ENCODE measurements at regions of chr22 and their contacts with region 1.

Region 1: DNA sequence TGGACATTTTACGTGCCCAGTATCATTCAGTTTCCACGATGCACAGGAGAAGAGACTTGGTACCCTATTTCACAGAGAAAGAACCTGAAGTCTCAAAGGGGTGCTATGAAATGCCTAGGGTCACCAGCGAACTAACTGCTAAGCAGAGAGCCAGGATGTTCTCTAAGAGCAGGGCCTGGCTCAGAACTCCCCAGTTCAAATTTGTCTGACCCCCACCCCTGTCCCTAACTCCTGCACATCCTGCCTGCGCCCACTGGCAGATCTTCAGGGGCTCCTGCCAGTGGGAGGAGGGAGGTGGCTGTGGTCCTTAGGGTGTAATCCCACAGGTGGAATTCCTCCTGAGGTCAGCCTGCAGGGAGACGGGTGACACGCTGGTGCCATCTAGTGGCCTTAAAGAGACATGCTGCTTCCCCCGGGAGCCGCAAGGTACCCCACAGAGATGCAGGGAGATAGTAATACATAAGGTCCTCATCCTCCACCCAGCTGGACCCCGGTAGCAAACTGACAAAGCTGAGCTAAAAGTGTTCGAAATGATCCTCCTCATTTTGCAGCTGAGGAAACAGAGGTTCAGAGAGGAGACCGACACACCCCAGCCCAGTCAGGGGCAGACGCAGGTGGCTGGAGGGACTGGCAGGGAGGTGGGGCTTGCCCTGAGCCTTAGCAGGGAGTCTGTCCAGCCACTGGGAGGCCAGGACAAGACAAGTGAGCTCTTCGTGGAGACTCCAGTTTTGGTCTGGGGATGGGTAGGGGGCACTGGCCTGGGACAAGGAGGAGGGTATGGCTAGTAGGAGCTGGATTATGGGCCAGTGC is 34.1 kb downstream of the MB start:
- DNase-seq: peak in 1 of 2 experiments; percentile 82
- H3K4me3 ChIP-seq: no peak overlapping the region
- H3K27ac ChIP-seq: no peak overlapping the region
- H3K4me1 ChIP-seq: no peaks in the 10 kb centered on the region
- H3K27me3 ChIP-seq: no peaks in the 10 kb centered on the region; a peak in 1 of 7 replicates
- CTCF ChIP-seq: peak; percentile 92 to 95 (median 92)
- EP300 ChIP-seq: no peak
- POLR2A ChIP-seq: no peak
- RAD21 ChIP-seq: peak; percentile 95 to 97

Region 2: DNA sequence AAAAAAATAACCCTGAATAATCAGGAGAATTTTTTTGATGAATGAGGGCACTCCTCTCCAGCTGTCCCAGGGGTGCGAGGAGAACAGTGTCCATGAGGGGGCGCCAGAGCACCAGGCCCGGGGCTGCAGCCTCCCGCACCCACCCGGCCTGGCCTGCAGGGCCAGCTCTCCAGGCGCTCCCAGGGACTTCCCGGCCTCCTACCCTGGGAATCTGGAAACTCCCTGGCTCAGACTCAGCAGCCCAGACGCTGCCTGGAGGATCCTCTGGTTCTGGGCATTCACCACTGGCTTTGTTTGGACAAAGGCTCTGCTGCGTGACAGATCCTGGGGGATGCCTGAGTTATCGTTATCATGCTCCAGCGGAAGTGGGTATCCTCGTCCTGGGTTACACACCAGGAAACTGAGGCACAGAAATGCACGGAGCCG is 152.2 kb before region 1 on chr22:
- CTCF ChIA-PET with region 1: interaction called, 124 read pairs
- POLR2A ChIA-PET with region 1: interaction called, 16 read pairs
- DNase-seq: peak; percentile 49 to 98
- H3K4me3 ChIP-seq: no peak overlapping the region
- H3K27ac ChIP-seq: no peak overlapping the region
- H3K4me1 ChIP-seq: peaks cover under 1 to 10% (median 3%) of the 10 kb centered on the region in 4 experiments; a peak in 6 of 7 replicates
- H3K27me3 ChIP-seq: no peaks in the 10 kb centered on the region
- CTCF ChIP-seq: peak; percentile 85 to 98 (median 90)
- EP300 ChIP-seq: no peak
- POLR2A ChIP-seq: no peak
- RAD21 ChIP-seq: peak; percentile 96 to 97

Region 3: DNA sequence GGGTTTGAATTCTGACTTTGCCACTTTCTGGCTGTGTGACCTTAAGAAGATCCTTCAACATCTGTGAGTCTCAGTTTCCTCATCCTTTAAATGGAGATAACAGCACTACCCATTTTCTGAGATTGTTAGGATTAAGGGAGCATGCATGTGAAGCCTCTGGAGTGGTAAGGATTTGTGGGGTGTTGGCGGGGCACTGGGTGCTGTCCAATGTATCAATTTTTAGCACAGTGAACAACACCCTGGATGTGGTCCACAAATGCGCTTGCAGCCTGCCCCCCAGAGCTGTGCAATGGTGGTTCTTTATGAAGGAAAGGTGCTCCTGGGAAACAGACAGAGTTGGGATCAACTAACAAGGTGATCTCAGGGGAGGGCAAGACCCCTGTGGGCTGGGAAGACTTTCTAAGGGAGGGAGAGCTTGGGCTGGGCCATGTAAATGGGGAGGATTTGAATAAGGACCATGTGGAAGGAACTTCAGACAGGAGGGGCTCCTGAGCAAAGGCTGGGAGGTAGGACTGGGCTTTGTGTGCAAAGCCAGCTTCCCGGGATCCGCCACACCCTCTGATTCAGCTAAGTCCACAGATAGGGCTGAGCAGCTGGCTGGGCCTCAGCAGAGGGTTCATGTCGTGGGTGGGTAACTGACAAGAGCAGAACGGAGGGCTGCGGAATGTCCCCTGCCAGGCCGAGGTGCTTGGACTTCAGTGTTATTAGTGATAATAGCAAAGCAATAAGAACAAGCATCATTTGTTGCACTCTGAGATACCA is 65.1 kb before region 1 on chr22:
- CTCF ChIA-PET with region 1: interaction called, 13 read pairs
- POLR2A ChIA-PET with region 1: no interaction called
- DNase-seq: no peak
- H3K4me3 ChIP-seq: no peak overlapping the region
- H3K27ac ChIP-seq: no peak overlapping the region
- H3K4me1 ChIP-seq: peaks cover 0 to 6% (median 3%) of the 10 kb centered on the region in 4 experiments; a peak in 5 of 7 replicates
- H3K27me3 ChIP-seq: no peaks in the 10 kb centered on the region; a peak in 1 of 7 replicates
- CTCF ChIP-seq: no peak
- EP300 ChIP-seq: no peak
- POLR2A ChIP-seq: no peak
- RAD21 ChIP-seq: no peak

Region 4: GRCh38 chr22:35539910-35540594 is 43.0 kb before region 1 on chr22:
- CTCF ChIA-PET with region 1: interaction called, 27 read pairs
- POLR2A ChIA-PET with region 1: no interaction called
- DNase-seq: peak in 1 of 2 experiments; percentile 74
- H3K4me3 ChIP-seq: peak overlapping the region; percentile 44 to 73 (median 48)
- H3K27ac ChIP-seq: no peak overlapping the region
- H3K4me1 ChIP-seq: peaks cover 4 to 31% (median 17%) of the 10 kb centered on the region in 4 experiments
- H3K27me3 ChIP-seq: peaks cover 0 to 31% (median 19%) of the 10 kb centered on the region in 4 experiments; a peak in 5 of 7 replicates
- CTCF ChIP-seq: no peak
- EP300 ChIP-seq: no peak
- POLR2A ChIP-seq: no peak
- RAD21 ChIP-seq: no peak

Region 5: DNA sequence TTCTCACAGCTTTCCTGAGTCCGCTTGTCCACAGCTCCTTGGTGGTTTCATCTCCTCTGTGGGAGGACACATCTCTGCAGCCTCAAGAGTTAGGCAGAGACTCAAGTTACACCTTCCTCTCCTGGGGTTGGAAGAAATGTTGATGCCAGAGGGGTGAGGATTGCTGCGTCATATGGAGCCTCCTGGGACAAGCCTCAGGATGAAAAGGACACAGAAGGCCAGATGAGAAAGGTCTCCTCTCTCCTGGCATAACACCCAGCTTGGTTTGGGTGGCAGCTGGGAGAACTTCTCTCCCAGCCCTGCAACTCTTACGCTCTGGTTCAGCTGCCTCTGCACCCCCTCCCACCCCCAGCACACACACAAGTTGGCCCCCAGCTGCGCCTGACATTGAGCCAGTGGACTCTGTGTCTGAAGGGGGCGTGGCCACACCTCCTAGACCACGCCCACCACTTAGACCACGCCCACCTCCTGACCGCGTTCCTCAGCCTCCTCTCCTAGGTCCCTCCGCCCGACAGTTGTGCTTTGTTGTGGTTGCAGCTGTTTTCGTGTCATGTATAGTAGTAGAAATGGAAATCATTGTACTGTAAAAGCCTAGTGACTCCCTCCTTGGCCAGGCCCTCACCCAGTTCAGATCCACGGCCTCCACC is 30.7 kb before region 1 on chr22:
- CTCF ChIA-PET with region 1: interaction called, 15 read pairs
- POLR2A ChIA-PET with region 1: interaction called, 4 read pairs
- DNase-seq: peak in 1 of 2 experiments; percentile 94
- H3K4me3 ChIP-seq: no peak overlapping the region
- H3K27ac ChIP-seq: no peak overlapping the region
- H3K4me1 ChIP-seq: peaks cover 0 to 23% (median 11%) of the 10 kb centered on the region in 4 experiments; a peak in 6 of 7 replicates
- H3K27me3 ChIP-seq: no peaks in the 10 kb centered on the region; a peak in 1 of 7 replicates
- CTCF ChIP-seq: no peak
- EP300 ChIP-seq: no peak
- POLR2A ChIP-seq: no peak
- RAD21 ChIP-seq: no peak

Region 6: DNA sequence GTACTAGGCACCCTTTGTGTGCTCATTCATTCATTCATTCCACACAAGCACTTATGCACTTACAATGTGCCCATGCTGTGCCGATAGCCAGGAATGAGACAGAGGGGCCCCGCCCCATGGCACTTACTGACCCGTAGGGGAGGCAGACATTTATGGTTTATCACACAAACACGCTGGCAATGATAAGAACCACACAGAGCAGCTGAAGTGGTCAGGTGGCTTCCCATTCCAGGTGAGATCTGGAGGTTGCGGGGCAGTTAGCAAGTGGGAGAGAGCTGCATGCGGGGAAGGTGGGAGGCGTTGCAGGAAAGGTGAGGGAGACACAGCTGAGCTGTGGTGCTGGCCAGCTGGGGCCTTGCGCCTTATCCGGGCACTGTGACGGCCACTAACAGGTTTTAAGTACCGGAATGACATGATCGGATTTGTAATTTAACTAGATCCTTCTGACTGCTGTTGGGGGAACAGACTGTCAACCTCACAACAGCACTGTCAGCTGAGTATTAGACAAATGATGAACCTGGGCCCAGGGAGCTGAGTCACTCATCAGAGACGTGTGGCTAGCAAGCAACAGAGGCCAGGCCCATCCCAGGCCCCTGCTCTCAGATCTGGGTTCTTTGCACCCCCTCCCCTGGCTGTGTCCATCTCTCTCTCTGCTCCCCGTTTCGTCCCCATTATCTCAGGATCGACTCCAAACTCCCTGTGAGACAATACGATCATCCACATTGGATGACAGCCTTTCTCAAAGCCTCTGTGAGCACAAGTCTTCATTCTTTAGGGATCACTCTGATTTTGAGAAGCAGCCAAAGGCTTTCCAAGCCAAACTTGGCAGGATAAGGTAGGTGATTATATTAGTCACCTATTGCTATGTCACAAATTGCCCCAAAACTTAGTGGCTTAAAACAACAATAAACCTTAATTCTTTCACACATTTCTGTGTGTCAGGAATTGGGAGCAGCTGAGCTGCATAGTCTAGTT is 14.0 kb before region 1 on chr22:
- CTCF ChIA-PET with region 1: interaction called, 29 read pairs
- POLR2A ChIA-PET with region 1: no interaction called
- DNase-seq: no peak
- H3K4me3 ChIP-seq: no peak overlapping the region
- H3K27ac ChIP-seq: no peak overlapping the region
- H3K4me1 ChIP-seq: peaks cover 0 to 3% (median 0%) of the 10 kb centered on the region in 4 experiments; a peak in 1 of 7 replicates
- H3K27me3 ChIP-seq: no peaks in the 10 kb centered on the region
- CTCF ChIP-seq: no peak
- EP300 ChIP-seq: no peak
- POLR2A ChIP-seq: no peak
- RAD21 ChIP-seq: no peak

Region 7: DNA sequence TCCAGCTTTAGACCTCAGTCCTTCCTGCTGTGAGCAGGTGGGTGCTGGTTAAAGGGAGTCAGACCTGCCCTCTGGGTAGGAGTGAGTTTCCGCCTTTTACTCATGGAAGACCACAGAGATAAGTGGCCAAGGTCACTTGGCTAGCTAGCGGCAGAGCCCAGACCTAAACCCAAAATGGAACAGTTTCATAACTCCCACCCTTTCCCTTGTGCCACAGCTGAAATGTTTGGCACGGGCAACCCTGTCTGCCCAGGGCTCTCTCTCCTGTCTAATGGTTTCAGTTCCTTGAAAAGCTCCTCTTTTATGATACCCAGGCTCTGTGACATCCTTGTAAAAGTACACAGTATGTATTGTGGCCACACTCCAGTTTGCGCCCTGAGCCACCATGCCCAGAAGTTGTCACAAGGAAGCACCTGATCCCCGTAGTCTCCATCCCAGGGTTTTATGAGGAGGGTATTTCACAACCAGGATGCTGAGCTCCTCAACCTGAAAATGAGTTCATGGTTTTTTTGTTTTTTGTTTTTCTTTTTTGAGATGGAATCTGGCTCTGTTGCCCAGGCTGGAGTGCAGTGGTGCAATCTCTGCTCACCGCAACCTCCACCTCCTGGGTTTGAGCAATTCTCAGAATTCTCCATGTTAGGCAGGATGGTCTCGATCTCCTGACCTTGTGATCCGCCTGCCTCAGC is 29.0 kb after region 1 on chr22:
- CTCF ChIA-PET with region 1: interaction called, 12 read pairs
- POLR2A ChIA-PET with region 1: interaction called, 3 read pairs
- DNase-seq: no peak
- H3K4me3 ChIP-seq: no peak overlapping the region
- H3K27ac ChIP-seq: no peak overlapping the region
- H3K4me1 ChIP-seq: no peaks in the 10 kb centered on the region
- H3K27me3 ChIP-seq: no peaks in the 10 kb centered on the region; a peak in 1 of 7 replicates
- CTCF ChIP-seq: no peak
- EP300 ChIP-seq: no peak
- POLR2A ChIP-seq: no peak
- RAD21 ChIP-seq: no peak

Region 8: GRCh38 chr22:35697142-35697541 is 114.1 kb after region 1 on chr22:
- CTCF ChIA-PET with region 1: no interaction called
- POLR2A ChIA-PET with region 1: no interaction called
- DNase-seq: no peak
- H3K4me3 ChIP-seq: no peak overlapping the region
- H3K27ac ChIP-seq: no peak overlapping the region
- H3K4me1 ChIP-seq: no peaks in the 10 kb centered on the region
- H3K27me3 ChIP-seq: no peaks in the 10 kb centered on the region
- CTCF ChIP-seq: no peak
- EP300 ChIP-seq: no peak
- POLR2A ChIP-seq: no peak
- RAD21 ChIP-seq: no peak

Region 9: DNA sequence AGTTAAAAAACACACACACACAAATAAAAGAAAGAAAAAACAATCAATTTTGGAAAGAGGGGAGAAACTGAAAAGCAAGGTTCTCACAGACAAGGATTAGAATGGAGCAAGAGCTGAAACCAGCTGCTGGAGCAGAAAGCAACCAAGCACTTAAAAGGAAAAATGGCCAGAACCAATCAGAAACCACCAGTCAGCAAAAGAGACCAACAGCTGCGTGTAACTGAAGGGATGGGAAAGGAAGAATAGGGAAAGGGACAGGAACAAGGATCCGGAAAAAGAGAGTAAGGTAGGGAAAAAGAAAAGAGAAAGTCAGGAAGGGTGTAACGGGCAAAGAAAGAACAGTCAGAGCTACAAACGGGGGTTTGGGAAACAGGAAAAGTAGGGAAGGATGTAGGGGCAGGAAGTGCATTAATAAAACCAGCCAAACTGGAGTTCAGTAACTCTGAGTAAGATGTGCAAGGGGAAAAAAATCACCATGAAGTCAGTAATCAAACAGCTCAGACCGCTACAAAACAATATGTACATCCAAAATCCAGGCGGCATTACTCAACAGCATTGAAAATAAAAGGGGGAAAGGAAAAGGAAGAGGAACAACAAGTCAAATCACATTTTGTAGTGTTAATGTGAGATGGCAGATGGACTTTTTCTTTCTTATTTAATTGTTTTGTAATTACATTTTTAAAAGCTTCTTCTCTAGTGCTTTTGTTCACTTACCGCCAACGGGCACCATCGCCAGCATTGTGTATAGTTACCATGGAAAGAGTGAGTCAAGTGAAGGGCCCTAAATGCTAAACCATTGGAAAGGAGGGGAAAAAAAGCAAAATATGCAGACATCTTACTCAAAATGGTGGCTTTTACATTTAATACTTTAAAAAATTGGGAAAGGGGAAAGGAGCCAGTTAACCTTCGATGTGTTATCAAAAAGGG is 183.9 kb after region 1 on chr22:
- CTCF ChIA-PET with region 1: no interaction called
- POLR2A ChIA-PET with region 1: no interaction called
- DNase-seq: no peak
- H3K4me3 ChIP-seq: no peak overlapping the region
- H3K27ac ChIP-seq: no peak overlapping the region
- H3K4me1 ChIP-seq: peaks cover 0 to 5% (median 2%) of the 10 kb centered on the region in 4 experiments; a peak in 2 of 7 replicates
- H3K27me3 ChIP-seq: no peaks in the 10 kb centered on the region
- CTCF ChIP-seq: no peak
- EP300 ChIP-seq: no peak
- POLR2A ChIP-seq: no peak
- RAD21 ChIP-seq: no peak

Measured in H1 (cell line).